ENCODE measurements at regions of chr2 and their contacts with region 1.

Region 1: GRCh38 chr2:33560017-33560416 is 39.1 kb downstream of the FAM98A start:
- DNase-seq: no peak
- ATAC-seq: no peak
- H3K4me3 ChIP-seq: no peak overlapping the region
- H3K4me3 Mint-ChIP-seq: no peak overlapping the region
- H3K27ac ChIP-seq: no peak overlapping the region
- H3K27ac Mint-ChIP-seq: no peak overlapping the region
- H3K4me1 ChIP-seq: no peaks in the 10 kb centered on the region
- H3K4me1 Mint-ChIP-seq: peaks cover 3% of the 10 kb centered on the region
- H3K27me3 ChIP-seq: no peaks in the 10 kb centered on the region
- H3K27me3 Mint-ChIP-seq: no peaks in the 10 kb centered on the region
- CTCF ChIP-seq: no peak

Region 2: DNA sequence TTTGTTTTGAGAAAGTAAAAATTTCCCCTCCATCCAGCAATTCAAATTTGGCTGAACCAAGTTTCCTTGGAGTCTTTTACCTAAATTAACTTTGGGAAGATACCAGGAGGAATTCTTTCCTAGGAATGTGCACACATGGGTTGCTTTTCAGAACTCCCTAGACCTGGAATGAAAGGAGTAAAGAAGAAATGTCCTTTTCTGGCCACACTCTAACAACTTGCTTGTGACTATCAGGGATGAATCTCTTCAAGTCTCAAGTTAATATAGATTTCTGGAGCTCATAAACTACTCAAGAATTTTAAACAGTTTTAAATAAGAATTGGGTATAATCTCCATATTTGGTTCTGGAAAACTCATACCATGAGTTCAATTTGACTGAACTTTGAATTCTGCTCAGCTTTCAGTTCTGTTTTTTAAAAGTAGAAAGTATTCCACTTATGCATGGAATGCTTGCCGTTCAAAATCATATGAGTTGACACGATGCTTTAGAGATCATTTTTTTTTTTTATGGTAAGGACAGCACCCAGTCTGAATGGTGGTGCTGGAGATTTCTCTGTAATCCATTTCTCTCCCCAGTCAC is 75.9 kb before region 1 on chr2:
- CTCF ChIA-PET with region 1: no interaction called
- POLR2A ChIA-PET with region 1: no interaction called
- intact Hi-C with region 1: loop called in 1 of 2 experiments (anchors 5 kb)
- DNase-seq: no peak
- ATAC-seq: no peak
- H3K4me3 ChIP-seq: no peak overlapping the region
- H3K4me3 Mint-ChIP-seq: no peak overlapping the region
- H3K27ac ChIP-seq: no peak overlapping the region
- H3K27ac Mint-ChIP-seq: no peak overlapping the region
- H3K4me1 ChIP-seq: no peaks in the 10 kb centered on the region
- H3K4me1 Mint-ChIP-seq: no peaks in the 10 kb centered on the region
- H3K27me3 ChIP-seq: no peaks in the 10 kb centered on the region
- H3K27me3 Mint-ChIP-seq: no peaks in the 10 kb centered on the region
- CTCF ChIP-seq: no peak

Region 3: GRCh38 chr2:33727361-33728032 is 167.5 kb after region 1 on chr2:
- CTCF ChIA-PET with region 1: no interaction called
- POLR2A ChIA-PET with region 1: no interaction called
- intact Hi-C with region 1: no loop called
- DNase-seq: peak in 1 of 14 experiments; percentile 6
- ATAC-seq: no peak
- H3K4me3 ChIP-seq: no peak overlapping the region
- H3K4me3 Mint-ChIP-seq: no peak overlapping the region
- H3K27ac ChIP-seq: no peak overlapping the region
- H3K27ac Mint-ChIP-seq: no peak overlapping the region
- H3K4me1 ChIP-seq: no peaks in the 10 kb centered on the region
- H3K4me1 Mint-ChIP-seq: no peaks in the 10 kb centered on the region
- H3K27me3 ChIP-seq: no peaks in the 10 kb centered on the region
- H3K27me3 Mint-ChIP-seq: peaks cover 4% of the 10 kb centered on the region
- CTCF ChIP-seq: no peak